ENCODE measurements at regions of chr15 and their contacts with region 1.

Region 1: GRCh38 chr15:79184465-79184892 is 93.9 kb upstream of the RASGRF1 start:
- DNase-seq: peak in 1 of 2 experiments; percentile 87
- H3K4me3 ChIP-seq: no peak overlapping the region
- H3K27ac ChIP-seq: no peak overlapping the region
- H3K4me1 ChIP-seq: no peaks in the 10 kb centered on the region; a peak in 1 of 7 replicates
- H3K27me3 ChIP-seq: no peaks in the 10 kb centered on the region; a peak in 2 of 7 replicates
- CTCF ChIP-seq: peak; percentile 79 to 97 (median 96)
- EP300 ChIP-seq: no peak
- POLR2A ChIP-seq: no peak
- RAD21 ChIP-seq: peak; percentile 94 to 97

Region 2: GRCh38 chr15:79028411-79028964 is 156.0 kb before region 1 on chr15:
- CTCF ChIA-PET with region 1: interaction called, 352 read pairs
- POLR2A ChIA-PET with region 1: no interaction called
- DNase-seq: peak; percentile 23 to 90
- H3K4me3 ChIP-seq: no peak overlapping the region
- H3K27ac ChIP-seq: no peak overlapping the region
- H3K4me1 ChIP-seq: no peaks in the 10 kb centered on the region; a peak in 1 of 7 replicates
- H3K27me3 ChIP-seq: no peaks in the 10 kb centered on the region
- CTCF ChIP-seq: peak; percentile 63 to 95 (median 95)
- EP300 ChIP-seq: no peak
- POLR2A ChIP-seq: no peak
- RAD21 ChIP-seq: peak; percentile 97 to 99

Region 3: GRCh38 chr15:79084308-79084968 is 100.0 kb before region 1 on chr15:
- CTCF ChIA-PET with region 1: interaction called, 14 read pairs
- POLR2A ChIA-PET with region 1: no interaction called
- DNase-seq: no peak
- H3K4me3 ChIP-seq: no peak overlapping the region
- H3K27ac ChIP-seq: no peak overlapping the region
- H3K4me1 ChIP-seq: peaks cover 0 to 4% (median 3%) of the 10 kb centered on the region in 4 experiments; a peak in 3 of 7 replicates
- H3K27me3 ChIP-seq: peaks cover 22 to 53% (median 41%) of the 10 kb centered on the region in 4 experiments
- CTCF ChIP-seq: no peak
- EP300 ChIP-seq: no peak
- POLR2A ChIP-seq: no peak
- RAD21 ChIP-seq: no peak

Region 4: GRCh38 chr15:79115986-79116665 is 68.4 kb before region 1 on chr15:
- CTCF ChIA-PET with region 1: interaction called, 14 read pairs
- POLR2A ChIA-PET with region 1: no interaction called
- DNase-seq: peak in 1 of 2 experiments; percentile 17
- H3K4me3 ChIP-seq: no peak overlapping the region
- H3K27ac ChIP-seq: no peak overlapping the region
- H3K4me1 ChIP-seq: no peaks in the 10 kb centered on the region
- H3K27me3 ChIP-seq: no peaks in the 10 kb centered on the region; a peak in 1 of 7 replicates
- CTCF ChIP-seq: no peak
- EP300 ChIP-seq: no peak
- POLR2A ChIP-seq: no peak
- RAD21 ChIP-seq: no peak

Region 5: DNA sequence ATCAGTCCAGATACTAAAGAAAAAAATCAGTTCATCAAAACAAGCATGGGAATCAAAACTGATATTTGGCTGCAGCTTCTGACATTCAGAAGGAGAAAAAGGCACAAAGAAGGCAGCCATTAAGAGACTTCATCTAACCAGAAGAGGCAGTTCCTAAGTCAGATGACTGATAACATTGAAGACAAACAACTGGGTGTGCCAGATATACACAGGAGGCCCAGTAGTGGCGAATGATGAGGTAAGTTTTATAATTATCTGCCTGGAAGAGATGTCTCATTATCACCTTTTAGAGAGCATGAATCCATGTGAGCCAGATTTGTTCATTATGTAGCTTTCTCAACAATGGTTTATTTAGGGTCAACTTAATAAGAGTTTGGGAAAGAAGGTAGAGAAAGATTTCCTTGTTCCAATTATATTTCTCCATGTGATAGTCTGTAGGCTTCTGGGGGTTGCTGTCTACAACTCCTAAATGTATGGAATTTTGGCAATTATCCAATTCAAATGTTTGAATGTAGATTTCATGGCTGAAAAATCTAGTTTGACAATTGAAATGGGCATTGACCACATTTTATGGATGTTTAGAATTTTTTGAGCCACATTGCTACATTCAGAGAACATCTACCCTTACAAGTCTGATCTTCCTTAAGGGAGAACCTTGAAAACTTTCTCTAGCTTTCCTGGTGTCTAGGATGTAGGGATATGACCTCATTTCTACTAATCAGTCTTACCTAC is 43.5 kb before region 1 on chr15:
- CTCF ChIA-PET with region 1: interaction called, 22 read pairs
- POLR2A ChIA-PET with region 1: no interaction called
- DNase-seq: no peak
- H3K4me3 ChIP-seq: no peak overlapping the region
- H3K27ac ChIP-seq: no peak overlapping the region
- H3K4me1 ChIP-seq: peaks cover 5 to 13% (median 7%) of the 10 kb centered on the region in 4 experiments; a peak in 6 of 7 replicates
- H3K27me3 ChIP-seq: no peaks in the 10 kb centered on the region
- CTCF ChIP-seq: no peak
- EP300 ChIP-seq: no peak
- POLR2A ChIP-seq: no peak
- RAD21 ChIP-seq: no peak

Region 6: DNA sequence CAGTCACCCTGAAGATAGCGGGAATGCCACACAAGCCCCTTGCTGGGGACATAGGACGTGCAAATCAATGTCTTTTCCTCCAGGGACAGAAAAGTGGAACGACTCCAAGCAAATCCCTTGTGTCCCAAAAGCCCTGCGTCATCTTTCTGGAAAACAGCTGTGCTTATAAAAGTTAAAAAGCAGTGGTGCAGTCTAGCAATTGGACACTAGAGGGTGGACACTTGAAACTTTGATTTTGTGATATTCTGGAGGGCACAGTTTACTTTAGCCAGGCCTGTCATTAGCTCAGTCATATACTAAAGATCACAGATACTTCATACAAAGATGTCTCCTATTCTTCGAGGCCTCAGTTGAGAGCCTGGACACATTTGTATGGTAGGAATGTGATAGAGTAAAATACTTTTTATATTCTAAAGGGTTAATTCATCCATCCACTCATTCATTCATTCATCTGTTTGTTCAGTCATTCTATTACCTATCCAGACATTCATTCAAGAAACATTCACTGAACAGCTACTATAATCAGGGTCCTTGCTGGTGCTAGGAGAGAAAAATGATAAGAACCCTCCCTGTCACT is 34.2 kb after region 1 on chr15:
- CTCF ChIA-PET with region 1: interaction called, 293 read pairs
- POLR2A ChIA-PET with region 1: no interaction called
- DNase-seq: no peak
- H3K4me3 ChIP-seq: no peak overlapping the region
- H3K27ac ChIP-seq: no peak overlapping the region
- H3K4me1 ChIP-seq: peaks cover 0 to 3% (median under 1%) of the 10 kb centered on the region in 4 experiments; a peak in 1 of 7 replicates
- H3K27me3 ChIP-seq: no peaks in the 10 kb centered on the region
- CTCF ChIP-seq: peak in 2 of 3 experiments; percentile 10 to 29; a peak in 1 of 4 replicates
- EP300 ChIP-seq: no peak
- POLR2A ChIP-seq: no peak
- RAD21 ChIP-seq: peak; percentile 3 to 24; a peak in 3 of 4 replicates

Region 7: GRCh38 chr15:79339564-79340314 is 155.3 kb after region 1 on chr15:
- CTCF ChIA-PET with region 1: no interaction called
- POLR2A ChIA-PET with region 1: no interaction called
- DNase-seq: no peak
- H3K4me3 ChIP-seq: no peak overlapping the region
- H3K27ac ChIP-seq: no peak overlapping the region
- H3K4me1 ChIP-seq: no peaks in the 10 kb centered on the region
- H3K27me3 ChIP-seq: no peaks in the 10 kb centered on the region
- CTCF ChIP-seq: peak in 2 of 3 experiments; percentile 64 to 78; a peak in 2 of 4 replicates
- EP300 ChIP-seq: no peak
- POLR2A ChIP-seq: no peak
- RAD21 ChIP-seq: peak; percentile 82 to 86

Measured in H1 (cell line).